Heart right ventricle (tissue), 16 donors: ENCODE measurements at regions of chr11 and their contacts with region 1.

Region 1: DNA sequence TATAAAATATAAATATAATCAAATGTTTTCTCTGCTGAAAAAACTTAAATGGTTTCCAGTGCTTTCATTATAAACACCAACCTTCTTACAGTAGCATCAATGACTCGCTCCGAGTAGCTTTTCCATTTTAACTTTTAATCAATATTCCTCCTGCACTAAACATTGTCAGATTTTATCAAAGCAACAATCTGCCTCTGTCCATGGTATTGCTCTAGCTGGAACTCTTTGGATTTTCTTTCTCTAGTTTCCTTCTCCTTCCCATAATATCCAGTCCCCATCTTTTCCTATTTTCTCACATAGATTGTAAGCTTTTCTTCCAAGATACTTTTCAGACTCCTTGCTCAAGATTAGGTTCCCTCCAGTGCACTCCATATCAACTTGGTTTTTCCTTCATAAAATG is 716.3 kb downstream of the NELL1 start:
- DNase-seq: no peak
- ATAC-seq: no peak
- H3K4me3 ChIP-seq: no peak overlapping the region
- H3K27ac ChIP-seq: no peak overlapping the region
- H3K4me1 ChIP-seq: no peaks in the 10 kb centered on the region
- H3K27me3 ChIP-seq: no peaks in the 10 kb centered on the region
- CTCF ChIP-seq: no peak

Region 2: GRCh38 chr11:21323617-21324016 is 62.1 kb before region 1 on chr11:
- intact Hi-C with region 1: loop called in 1 of 10 experiments (anchors 10 kb)
- DNase-seq: no peak
- ATAC-seq: no peak
- H3K4me3 ChIP-seq: no peak overlapping the region
- H3K27ac ChIP-seq: no peak overlapping the region
- H3K4me1 ChIP-seq: peaks cover 0 to 4% (median 0%) of the 10 kb centered on the region in 9 donors
- H3K27me3 ChIP-seq: no peaks in the 10 kb centered on the region
- CTCF ChIP-seq: no peak